Calu3 (cell line): ENCODE measurements at regions of chr6 and their contacts with region 1.

Region 1: GRCh38 chr6:30730601-30731435 is 10.7 kb downstream of the TUBB start:
- DNase-seq: peak; percentile 95
- H3K4me3 Mint-ChIP-seq: peak overlapping the region; percentile 66
- H3K27ac Mint-ChIP-seq: peak overlapping the region; percentile 98
- H3K4me1 Mint-ChIP-seq: peaks cover 22% of the 10 kb centered on the region
- H3K27me3 Mint-ChIP-seq: no peaks in the 10 kb centered on the region
- CTCF ChIP-seq: peak; percentile 84

Region 2: DNA sequence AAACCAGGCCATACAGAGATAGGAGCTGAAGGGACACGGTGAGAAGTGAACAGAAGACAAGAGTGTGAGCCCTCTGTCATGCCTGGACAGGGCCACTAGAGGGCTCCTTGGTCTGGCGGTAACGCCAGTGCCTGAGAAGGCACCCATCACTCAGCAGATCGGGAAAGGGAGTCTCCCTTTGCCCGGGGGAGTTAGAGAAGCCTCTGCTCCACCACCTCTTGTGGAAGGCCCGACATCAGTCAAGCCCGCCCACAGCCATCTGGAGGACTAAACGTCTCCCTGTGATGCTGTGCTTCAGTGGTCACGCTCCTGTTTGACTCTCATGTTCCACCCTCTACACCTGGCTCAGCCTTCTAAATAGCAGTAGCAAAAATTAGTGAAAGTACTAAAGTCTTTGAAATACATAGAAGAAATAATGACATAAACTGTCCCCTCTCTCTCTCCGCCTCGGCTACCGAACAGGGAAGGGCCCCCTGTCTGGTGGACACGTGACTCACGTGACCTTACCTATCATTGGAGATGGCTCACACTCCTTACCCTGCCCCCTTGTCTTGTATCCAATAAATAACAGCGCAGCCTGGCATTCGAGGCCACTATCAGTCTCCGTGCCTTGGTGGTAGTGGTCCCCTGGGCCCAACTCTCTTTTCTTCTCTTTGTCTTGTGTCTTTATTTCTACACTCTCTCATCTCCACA is 319.2 kb before region 1 on chr6:
- CTCF ChIA-PET with region 1: no interaction called
- intact Hi-C with region 1: no loop called
- DNase-seq: peak; percentile 70
- H3K4me3 Mint-ChIP-seq: no peak overlapping the region
- H3K27ac Mint-ChIP-seq: no peak overlapping the region
- H3K4me1 Mint-ChIP-seq: peaks cover 9% of the 10 kb centered on the region
- H3K27me3 Mint-ChIP-seq: peaks cover 100% of the 10 kb centered on the region
- CTCF ChIP-seq: peak; percentile 56

Region 3: GRCh38 chr6:30533460-30534294 is 197.1 kb before region 1 on chr6:
- CTCF ChIA-PET with region 1: no interaction called
- intact Hi-C with region 1: no loop called
- DNase-seq: no peak
- H3K4me3 Mint-ChIP-seq: no peak overlapping the region
- H3K27ac Mint-ChIP-seq: no peak overlapping the region
- H3K4me1 Mint-ChIP-seq: no peaks in the 10 kb centered on the region
- H3K27me3 Mint-ChIP-seq: no peaks in the 10 kb centered on the region
- CTCF ChIP-seq: no peak

Region 4: GRCh38 chr6:30616811-30617564 is 113.8 kb before region 1 on chr6 and contains the start of gene PPP1R10:
- CTCF ChIA-PET with region 1: interaction called, 10 read pairs
- intact Hi-C with region 1: no loop called
- DNase-seq: peak; percentile 99
- H3K4me3 Mint-ChIP-seq: peak within 1 kb of the TSS; percentile 70
- H3K27ac Mint-ChIP-seq: peak within 1 kb of the TSS; percentile 98
- H3K4me1 Mint-ChIP-seq: peaks cover 48% of the 10 kb centered on the region
- H3K27me3 Mint-ChIP-seq: peaks cover 16% of the 10 kb centered on the region
- CTCF ChIP-seq: no peak
- total RNA-seq, gene PPP1R10: 119 and 134 TPM in 2 replicates

Region 5: DNA sequence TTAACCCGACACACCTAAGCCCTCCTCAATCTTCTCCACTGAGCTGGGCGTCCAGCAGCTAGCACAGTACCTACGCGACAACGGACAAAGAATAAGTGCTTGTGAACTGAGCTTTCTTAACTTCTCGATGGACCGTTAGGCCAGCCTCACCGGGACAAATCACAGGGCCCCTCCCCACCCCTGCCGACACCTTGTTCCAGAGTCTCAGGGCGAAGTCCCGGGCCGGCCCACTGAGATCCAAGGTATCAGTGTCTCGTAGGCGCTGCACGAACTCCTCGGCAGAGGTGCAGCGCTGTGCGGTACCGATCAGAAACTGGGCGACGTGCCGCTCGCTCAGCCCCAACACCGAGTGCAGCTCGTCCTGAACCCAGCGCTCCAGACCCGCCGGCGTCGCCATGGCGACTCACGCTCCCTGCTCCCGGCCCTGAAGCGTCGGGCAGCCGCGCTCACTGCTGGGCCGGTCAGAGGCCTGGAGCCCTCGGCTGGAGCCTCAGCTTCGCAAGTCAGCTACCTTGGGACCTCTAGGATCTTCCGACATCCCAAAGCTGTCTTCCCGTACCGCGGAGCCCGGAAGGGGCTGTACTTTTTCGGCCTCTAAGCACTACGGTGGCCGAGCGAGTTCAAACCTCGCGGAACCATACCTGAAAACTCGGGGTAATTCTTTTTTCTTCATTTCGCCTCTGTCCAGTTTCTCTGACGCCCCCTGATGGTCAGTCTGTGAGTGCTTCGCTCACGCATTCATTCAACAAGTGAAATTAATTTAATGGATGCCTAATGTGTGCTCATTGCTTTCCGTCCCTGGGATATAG is 58.2 kb before region 1 on chr6 and contains the start of gene DHX16:
- CTCF ChIA-PET with region 1: interaction called, 30 read pairs
- intact Hi-C with region 1: no loop called
- DNase-seq: peak; percentile 98
- H3K4me3 Mint-ChIP-seq: peak within 1 kb of the TSS; percentile 84
- H3K27ac Mint-ChIP-seq: peak within 1 kb of the TSS; percentile 18
- H3K4me1 Mint-ChIP-seq: peaks cover 29% of the 10 kb centered on the region
- H3K27me3 Mint-ChIP-seq: no peaks in the 10 kb centered on the region
- CTCF ChIP-seq: peak; percentile 59
- total RNA-seq, gene DHX16: 51.6 and 55.6 TPM in 2 replicates

Region 6: DNA sequence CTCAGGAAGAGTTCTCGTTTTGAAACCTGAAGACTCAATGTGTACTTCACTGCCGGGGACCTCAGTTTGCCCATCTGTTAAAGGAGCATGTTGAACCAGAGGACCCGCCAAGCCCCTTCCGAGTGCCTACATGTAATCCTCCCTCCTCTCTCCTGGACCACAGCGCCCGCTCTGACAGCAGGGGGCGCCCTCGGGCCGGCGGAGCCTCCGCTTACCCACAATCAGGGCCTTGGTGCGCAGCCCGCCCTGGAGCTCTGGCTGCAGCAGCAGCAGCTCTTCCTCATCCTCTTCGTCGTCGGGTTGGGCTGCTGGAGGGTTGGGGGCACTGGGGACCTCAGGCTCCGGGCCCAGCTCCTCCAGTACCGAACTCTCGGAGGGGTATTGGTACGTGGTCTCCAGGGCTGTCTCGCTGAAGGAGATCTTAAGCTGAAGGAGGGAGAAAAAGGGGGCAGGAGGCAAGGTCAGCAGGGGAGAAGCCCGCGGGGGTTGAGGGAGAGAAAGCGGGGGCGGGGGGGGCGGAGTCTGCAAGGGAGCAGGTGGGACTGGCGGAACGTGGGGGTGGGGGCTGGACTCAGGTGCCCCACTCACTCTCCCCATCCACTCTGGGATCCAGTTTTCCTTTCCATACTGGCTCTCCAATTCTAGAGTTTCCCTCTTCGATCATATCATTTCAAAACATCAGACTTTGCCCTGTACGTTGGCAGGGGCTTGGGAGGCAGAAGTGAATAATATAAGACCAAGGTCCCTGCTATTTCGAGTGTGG is 51.7 kb before region 1 on chr6:
- CTCF ChIA-PET with region 1: interaction called, 50 read pairs
- intact Hi-C with region 1: no loop called
- DNase-seq: peak; percentile 96
- H3K4me3 Mint-ChIP-seq: peak overlapping the region; percentile 40
- H3K27ac Mint-ChIP-seq: peak overlapping the region; percentile 33
- H3K4me1 Mint-ChIP-seq: peaks cover 49% of the 10 kb centered on the region
- H3K27me3 Mint-ChIP-seq: no peaks in the 10 kb centered on the region
- CTCF ChIP-seq: peak; percentile 96

Region 7: DNA sequence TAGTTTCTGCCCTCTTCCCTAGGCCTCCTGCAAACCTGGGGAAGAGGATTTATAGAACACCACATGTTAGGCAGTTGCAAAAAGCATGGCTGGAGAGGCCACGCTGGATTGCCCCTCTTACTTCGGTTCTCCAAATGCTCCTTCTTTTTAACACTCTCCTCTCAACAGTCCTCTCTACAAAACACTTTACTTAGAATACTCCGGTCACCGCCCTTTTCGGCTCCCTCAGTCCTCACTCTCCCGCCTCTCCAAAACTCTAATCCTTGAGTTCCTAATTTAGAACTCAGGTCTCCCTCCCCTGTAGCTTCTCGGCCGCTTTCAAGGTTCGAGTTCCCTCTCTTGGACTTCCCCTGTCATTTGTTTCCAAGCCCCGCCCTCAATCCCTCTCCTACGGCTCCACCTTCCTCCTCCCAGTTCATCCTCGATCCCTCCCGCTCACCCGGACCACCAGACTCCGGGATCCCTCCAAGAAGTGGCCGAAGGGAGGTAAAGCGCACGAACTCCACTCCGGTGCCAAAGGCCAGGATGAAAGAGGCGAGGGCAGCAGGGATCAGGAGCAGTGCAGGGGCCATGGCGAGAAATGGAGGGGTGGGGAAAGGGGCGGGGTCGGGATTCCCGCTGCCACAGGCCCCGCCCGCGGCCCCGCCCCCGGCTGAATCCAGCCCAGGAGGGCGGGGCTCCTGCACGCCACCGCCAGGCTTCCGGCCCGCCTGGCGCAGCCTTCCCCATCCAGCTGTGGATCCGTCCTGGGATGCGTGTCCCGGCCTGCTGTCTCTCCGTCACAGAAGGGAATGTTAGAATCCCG is 40.2 kb before region 1 on chr6 and contains the start of gene NRM:
- CTCF ChIA-PET with region 1: interaction called, 10 read pairs
- intact Hi-C with region 1: no loop called
- DNase-seq: peak; percentile 93
- H3K4me3 Mint-ChIP-seq: peak within 1 kb of the TSS; percentile 74
- H3K27ac Mint-ChIP-seq: peak within 1 kb of the TSS; percentile 38
- H3K4me1 Mint-ChIP-seq: peaks cover 67% of the 10 kb centered on the region
- H3K27me3 Mint-ChIP-seq: no peaks in the 10 kb centered on the region
- CTCF ChIP-seq: no peak
- total RNA-seq, gene NRM: 22.8 and 30.2 TPM in 2 replicates

Region 8: GRCh38 chr6:30821862-30822782 is 91.3 kb after region 1 on chr6:
- CTCF ChIA-PET with region 1: interaction called, 18 read pairs
- intact Hi-C with region 1: no loop called
- DNase-seq: peak; percentile 50
- H3K4me3 Mint-ChIP-seq: no peak overlapping the region
- H3K27ac Mint-ChIP-seq: peak overlapping the region; percentile 43
- H3K4me1 Mint-ChIP-seq: peaks cover 65% of the 10 kb centered on the region
- H3K27me3 Mint-ChIP-seq: no peaks in the 10 kb centered on the region
- CTCF ChIP-seq: peak; percentile 71